ENCODE measurements at regions of chr20 and their contacts with region 1.

Region 1: GRCh38 chr20:50815162-50815989 is 20.5 kb downstream of the BCAS4 start:
- DNase-seq: peak; percentile 65
- ATAC-seq: peak; percentile 57
- H3K4me3 ChIP-seq: peak overlapping the region; percentile 53
- H3K27ac ChIP-seq: peak overlapping the region; percentile 95
- H3K4me1 ChIP-seq: peaks cover 92% of the 10 kb centered on the region
- H3K27me3 ChIP-seq: no peaks in the 10 kb centered on the region
- CTCF ChIP-seq: no peak
- EP300 ChIP-seq: peak in 1 of 2 experiments; percentile 57; a peak in 2 of 4 replicates
- POLR2A ChIP-seq: no peak
- RAD21 ChIP-seq: no peak

Region 2: DNA sequence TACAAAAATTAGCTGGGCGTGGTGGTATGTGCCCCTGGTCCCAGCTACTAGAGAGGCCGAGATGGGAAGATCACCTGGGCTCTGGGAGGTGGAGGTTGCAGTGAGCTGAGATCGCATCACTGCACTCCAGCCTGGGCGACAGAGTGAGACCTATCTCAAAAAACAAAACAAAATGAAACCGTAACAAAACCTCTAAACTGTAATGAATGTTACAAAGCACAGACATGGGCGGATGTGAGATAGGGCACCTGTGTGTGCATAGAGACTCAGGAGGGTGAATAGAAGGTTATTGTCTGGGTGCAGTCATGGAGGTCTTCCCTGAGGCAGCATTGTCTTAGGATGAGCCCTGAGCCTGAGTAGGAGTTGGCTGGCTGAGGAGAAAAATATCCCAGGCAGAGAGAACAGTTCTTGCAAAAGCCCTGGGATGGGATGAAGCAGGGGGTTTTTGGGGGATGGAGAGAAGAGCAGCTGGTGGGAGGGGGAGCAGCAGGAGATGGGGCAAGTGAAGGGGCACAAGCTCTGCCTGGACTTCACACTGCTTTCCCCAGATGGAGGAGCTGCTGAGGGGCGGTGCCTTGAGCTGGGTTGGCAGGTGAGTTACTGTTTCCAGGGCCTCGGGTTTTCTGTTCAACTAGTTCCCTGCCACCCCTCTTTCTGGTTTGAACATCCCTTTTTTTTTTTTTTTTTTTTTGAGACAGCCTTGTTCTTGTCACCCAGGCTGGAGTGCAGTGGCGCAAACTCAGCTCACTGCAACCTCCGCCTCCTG is 15.3 kb before region 1 on chr20:
- CTCF ChIA-PET with region 1: interaction called, 30 read pairs
- POLR2A ChIA-PET with region 1: interaction called, 26 read pairs
- RAD21 ChIA-PET with region 1: interaction called, 141 read pairs
- SMC1A ChIA-PET with region 1: interaction called, 119 read pairs
- in situ Hi-C with region 1: no loop called
- intact Hi-C with region 1: loop called (anchors 1 kb)
- DNase-seq: no peak
- ATAC-seq: peak; percentile 64
- H3K4me3 ChIP-seq: peak overlapping the region; percentile 63
- H3K27ac ChIP-seq: peak overlapping the region; percentile 95
- H3K4me1 ChIP-seq: peaks cover 29% of the 10 kb centered on the region
- H3K27me3 ChIP-seq: no peaks in the 10 kb centered on the region
- CTCF ChIP-seq: no peak
- EP300 ChIP-seq: no peak
- POLR2A ChIP-seq: no peak
- RAD21 ChIP-seq: no peak

Region 3: GRCh38 chr20:50844430-50845100 is 29.2 kb after region 1 on chr20:
- CTCF ChIA-PET with region 1: interaction called, 4 read pairs
- POLR2A ChIA-PET with region 1: interaction called, 3 read pairs
- RAD21 ChIA-PET with region 1: interaction called, 5 read pairs
- SMC1A ChIA-PET with region 1: interaction called, 7 read pairs
- in situ Hi-C with region 1: no loop called
- intact Hi-C with region 1: loop called (anchors 1 kb)
- DNase-seq: peak; percentile 83
- ATAC-seq: peak; percentile 96
- H3K4me3 ChIP-seq: no peak overlapping the region; the same call in 1 of the 2 replicates
- H3K27ac ChIP-seq: peak overlapping the region; percentile 96
- H3K4me1 ChIP-seq: peaks cover 50% of the 10 kb centered on the region
- H3K27me3 ChIP-seq: no peaks in the 10 kb centered on the region
- CTCF ChIP-seq: peak in 1 of 3 experiments; percentile 6; a peak in 1 of 6 replicates
- EP300 ChIP-seq: peak; percentile 76 to 83; a peak in 3 of 4 replicates
- POLR2A ChIP-seq: peak; percentile 73
- RAD21 ChIP-seq: peak; percentile 33

Region 4: DNA sequence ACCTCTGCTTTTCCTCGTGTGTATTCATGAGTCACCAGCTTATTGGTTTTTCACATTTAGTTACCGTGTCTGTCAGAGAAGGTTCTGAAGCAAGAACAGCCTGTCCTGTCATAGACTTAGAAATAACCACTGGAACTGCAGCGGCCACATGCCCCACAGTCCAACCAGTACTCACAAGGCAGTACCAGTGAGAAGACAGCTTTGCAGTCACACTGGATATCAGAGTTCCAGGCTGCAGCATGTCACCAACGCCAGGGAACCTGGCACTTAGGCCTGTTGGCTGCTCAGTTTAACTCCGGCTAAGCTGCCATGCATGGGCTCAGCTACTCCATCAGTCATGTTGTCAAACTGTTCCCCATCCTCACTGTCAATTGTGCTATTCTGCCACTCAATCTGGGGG is 75.8 kb after region 1 on chr20:
- CTCF ChIA-PET with region 1: interaction called, 3 read pairs
- POLR2A ChIA-PET with region 1: interaction called, 3 read pairs
- RAD21 ChIA-PET with region 1: no interaction called
- SMC1A ChIA-PET with region 1: interaction called, 3 read pairs
- in situ Hi-C with region 1: no loop called
- intact Hi-C with region 1: loop called (anchors 2 kb)
- DNase-seq: no peak
- ATAC-seq: no peak; the same call in 2 of the 3 replicates
- H3K4me3 ChIP-seq: no peak overlapping the region
- H3K27ac ChIP-seq: no peak overlapping the region
- H3K4me1 ChIP-seq: no peaks in the 10 kb centered on the region
- H3K27me3 ChIP-seq: no peaks in the 10 kb centered on the region
- CTCF ChIP-seq: no peak
- EP300 ChIP-seq: no peak
- POLR2A ChIP-seq: peak; percentile 77
- RAD21 ChIP-seq: no peak

Region 5: DNA sequence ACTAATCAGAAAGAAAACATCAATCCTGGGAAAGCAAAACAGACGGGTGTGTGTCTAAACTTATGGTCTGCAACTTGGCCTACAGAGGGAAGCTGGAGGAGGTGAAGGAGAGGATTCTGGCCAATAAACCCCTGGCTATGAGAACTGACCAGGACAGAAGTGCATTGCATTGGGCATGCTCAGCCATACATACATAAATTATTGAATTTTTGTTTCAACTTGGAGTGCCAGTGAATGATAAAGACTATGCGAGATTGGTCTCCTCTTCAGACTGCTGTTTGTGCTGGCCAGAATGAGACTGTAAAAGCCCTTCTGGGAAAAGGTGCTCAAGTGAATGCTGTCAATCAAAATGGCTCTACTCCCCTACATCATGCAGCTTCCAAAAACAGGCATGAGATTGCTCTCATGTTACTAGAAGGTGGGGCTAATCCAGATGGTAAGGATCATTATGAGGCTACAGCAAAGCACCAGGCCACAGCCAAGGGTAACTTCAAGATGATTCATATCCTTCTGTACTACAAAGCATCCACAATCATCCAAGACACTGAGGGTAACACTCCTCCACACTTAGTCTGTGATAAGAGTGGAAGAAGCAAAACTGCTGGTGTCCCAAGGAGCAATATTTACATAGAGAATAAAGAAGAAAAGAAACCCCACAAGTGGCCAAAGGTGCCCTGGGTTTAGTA is 98.5 kb after region 1 on chr20:
- CTCF ChIA-PET with region 1: interaction called, 7 read pairs
- POLR2A ChIA-PET with region 1: interaction called, 3 read pairs
- RAD21 ChIA-PET with region 1: interaction called, 10 read pairs
- SMC1A ChIA-PET with region 1: interaction called, 4 read pairs
- in situ Hi-C with region 1: no loop called
- intact Hi-C with region 1: no loop called
- DNase-seq: no peak
- ATAC-seq: peak; percentile 56
- H3K4me3 ChIP-seq: no peak overlapping the region
- H3K27ac ChIP-seq: no peak overlapping the region
- H3K4me1 ChIP-seq: peaks cover 76% of the 10 kb centered on the region
- H3K27me3 ChIP-seq: no peaks in the 10 kb centered on the region
- CTCF ChIP-seq: no peak
- EP300 ChIP-seq: no peak
- POLR2A ChIP-seq: no peak
- RAD21 ChIP-seq: no peak

Region 6: DNA sequence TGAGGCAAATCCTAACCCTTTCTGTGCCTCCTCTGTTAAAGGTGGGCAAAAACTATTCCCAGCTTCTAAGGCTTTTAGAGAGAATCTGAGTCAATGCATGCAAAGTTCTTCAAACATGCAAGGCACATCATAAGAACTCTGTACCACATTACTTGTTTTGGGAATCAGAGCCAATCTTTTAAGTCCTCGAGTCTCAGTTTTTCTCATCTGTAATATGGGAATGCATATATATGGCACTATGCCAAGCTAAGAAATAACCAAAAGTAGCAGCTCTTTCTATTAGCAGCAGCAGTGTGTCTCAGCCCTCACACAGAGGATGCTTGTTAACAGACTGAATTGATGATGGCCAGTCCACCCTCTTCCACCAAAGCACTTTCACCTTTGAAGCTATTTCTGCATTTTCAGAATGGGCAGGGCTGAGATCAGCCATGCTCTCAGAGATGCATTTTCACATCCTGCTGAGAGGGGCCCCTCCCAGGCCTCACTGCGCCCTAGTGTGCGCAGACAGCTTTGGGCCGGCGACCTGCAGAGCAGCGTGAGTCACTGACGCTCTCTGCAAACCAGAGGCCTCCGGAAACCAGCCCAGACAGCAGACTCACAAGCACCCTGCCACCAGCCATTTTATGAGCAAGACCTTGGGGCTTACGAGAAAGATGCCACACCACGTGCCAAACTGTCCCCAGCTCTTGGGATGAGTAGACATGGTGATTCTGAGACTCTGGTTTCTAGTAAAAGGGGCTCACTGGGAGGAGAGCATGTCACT is 589.1 kb after region 1 on chr20:
- CTCF ChIA-PET with region 1: no interaction called
- POLR2A ChIA-PET with region 1: no interaction called
- RAD21 ChIA-PET with region 1: no interaction called
- SMC1A ChIA-PET with region 1: no interaction called
- in situ Hi-C with region 1: loop called (anchors 10 kb)
- intact Hi-C with region 1: no loop called
- DNase-seq: peak; percentile 80
- ATAC-seq: peak; percentile 88
- H3K4me3 ChIP-seq: no peak overlapping the region
- H3K27ac ChIP-seq: peak overlapping the region; percentile 73
- H3K4me1 ChIP-seq: peaks cover 61% of the 10 kb centered on the region
- H3K27me3 ChIP-seq: no peaks in the 10 kb centered on the region
- CTCF ChIP-seq: no peak
- EP300 ChIP-seq: peak; percentile 16 to 77; a peak in 2 of 4 replicates
- POLR2A ChIP-seq: peak; percentile 70
- RAD21 ChIP-seq: no peak

Region 7: DNA sequence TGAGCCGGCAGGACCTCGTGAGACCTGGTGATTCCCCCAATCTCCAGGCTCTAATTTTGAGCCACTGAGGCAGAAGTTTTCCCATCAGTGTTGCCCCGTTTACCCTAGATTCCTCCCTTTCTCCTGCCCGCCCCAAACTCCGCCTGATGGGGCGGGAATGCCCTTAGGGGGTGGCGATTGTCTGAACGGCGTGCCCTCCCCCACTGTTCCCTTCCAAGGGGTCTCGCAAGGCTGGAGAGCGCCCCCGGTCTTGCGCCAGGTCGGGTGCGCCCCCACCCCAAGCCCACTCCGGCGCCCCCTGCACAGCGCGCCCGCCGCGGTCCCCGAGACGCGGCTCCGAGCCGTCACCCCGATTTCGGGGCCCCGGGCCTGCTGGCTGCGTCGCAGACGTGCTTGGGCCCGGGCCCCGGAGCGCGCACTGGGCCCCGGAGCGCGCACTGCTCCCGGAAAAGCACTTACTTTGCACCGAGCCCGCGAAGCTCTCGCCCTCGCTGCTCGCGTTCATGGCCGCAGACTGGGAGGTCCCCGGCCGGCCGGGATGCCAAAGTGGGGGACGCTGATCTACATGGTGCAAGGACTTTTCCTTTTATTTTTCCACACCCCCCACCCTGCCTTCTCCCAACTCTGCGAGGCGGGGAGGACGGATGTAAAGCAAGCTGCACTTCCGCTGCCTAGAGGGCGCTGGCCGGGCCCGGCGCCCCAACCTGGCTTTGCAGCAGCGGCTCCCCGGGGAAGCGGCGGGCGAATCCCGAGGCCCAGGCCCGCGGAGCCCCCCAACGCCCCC is 1375.9 kb after region 1 on chr20 and contains the start of gene ZFP64:
- CTCF ChIA-PET with region 1: no interaction called
- POLR2A ChIA-PET with region 1: no interaction called
- RAD21 ChIA-PET with region 1: no interaction called
- SMC1A ChIA-PET with region 1: no interaction called
- in situ Hi-C with region 1: loop called (anchors 25 kb)
- intact Hi-C with region 1: no loop called
- DNase-seq: no peak
- ATAC-seq: peak; percentile 85
- H3K4me3 ChIP-seq: peak within 1 kb of the TSS; percentile 91
- H3K27ac ChIP-seq: peak within 1 kb of the TSS; percentile 93
- H3K4me1 ChIP-seq: peaks cover 3% of the 10 kb centered on the region; the same call in 1 of the 2 replicates
- H3K27me3 ChIP-seq: no peaks in the 10 kb centered on the region
- CTCF ChIP-seq: peak; percentile 64 to 77 (median 71); a peak in 5 of 6 replicates
- EP300 ChIP-seq: 0 out of 4 replicates have a peak, but pooled peaks of 1 of the 2 experiments have one; percentile 30
- POLR2A ChIP-seq: peak; percentile 80
- RAD21 ChIP-seq: peak; percentile 31; the same call in 1 of the 2 replicates
- polyA plus RNA-seq, gene ZFP64: 2.3 to 3.3 TPM

Measured in GM12878 (cell line).